ENCODE measurements at regions of chr17 and their contacts with region 1.

Region 1: DNA sequence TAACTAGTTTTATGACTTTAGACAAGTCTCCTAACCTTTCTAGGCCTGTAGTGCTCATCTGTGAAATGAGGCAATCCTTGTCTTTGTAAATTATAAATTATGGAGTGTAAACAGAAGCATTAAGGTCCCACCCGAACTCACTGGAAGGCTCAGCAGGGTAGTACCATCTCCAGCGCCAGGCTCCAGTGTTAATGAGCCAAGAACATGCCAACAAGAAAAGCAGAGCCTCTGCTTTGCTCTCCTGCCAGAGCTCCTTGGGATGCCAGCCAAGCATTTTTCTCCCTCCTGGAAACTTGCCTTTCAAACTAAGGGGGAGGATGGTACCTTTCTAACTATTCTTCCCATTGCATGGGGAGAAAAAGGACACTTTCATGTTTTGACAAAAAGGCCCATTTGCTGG is 14.9 kb downstream of the LIMD2 start:
- DNase-seq: peak in 4 of 10 donors; percentile 48 to 68 (median 64)
- H3K4me3 ChIP-seq: no peak overlapping the region
- H3K27ac ChIP-seq: peak overlapping the region in 23 of 59 donors; percentile 1 to 59 (median 12)
- H3K27me3 ChIP-seq: no peaks in the 10 kb centered on the region
- CTCF ChIP-seq: no peak

Region 2: DNA sequence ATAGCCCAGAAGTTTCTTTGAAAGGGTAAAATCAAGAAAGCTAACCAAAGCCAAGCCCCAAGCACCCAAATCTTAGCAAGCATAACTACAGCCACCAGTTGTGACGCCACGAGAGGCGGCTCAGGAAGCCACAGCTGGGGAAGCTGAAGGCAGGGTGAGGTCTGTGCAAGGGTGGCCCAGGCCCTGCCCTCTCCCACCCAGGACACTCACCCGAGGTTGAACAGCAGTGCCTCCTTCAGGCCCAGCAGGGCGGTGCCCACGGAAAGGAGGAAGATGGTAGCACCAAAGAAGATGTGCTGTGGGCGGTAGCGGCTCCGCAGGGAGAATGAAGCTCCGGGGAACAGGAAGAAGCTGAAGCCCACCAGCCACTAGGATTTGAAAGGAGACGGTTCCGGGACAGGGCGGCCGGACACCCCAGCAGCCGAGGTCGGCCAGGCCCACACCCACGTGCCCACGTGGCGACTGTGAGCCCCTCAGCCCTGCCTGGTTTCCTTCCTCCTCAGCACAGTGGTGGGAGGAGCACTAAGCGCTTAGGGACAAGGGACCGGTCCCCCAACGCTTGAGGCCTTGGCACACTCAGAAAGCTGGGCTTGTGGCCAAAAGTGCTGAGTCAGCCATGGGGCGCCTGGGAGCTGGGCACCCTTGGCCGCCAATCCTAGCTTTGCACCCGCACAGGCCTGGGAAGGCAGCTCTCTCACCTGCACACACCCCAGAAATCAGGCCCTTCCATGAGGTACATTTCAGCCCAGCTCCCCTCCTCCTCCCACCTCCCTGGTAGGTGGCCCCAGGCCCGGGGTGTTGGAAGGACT is 250.0 kb before region 1 on chr17:
- intact Hi-C with region 1: loop called in 1 of 2 experiments (anchors 5 kb)
- DNase-seq: peak; percentile 40 to 94 (median 84)
- H3K4me3 ChIP-seq: peak overlapping the region in 20 of 59 donors; percentile 3 to 41 (median 24)
- H3K27ac ChIP-seq: peak overlapping the region in 45 of 59 donors; percentile 2 to 92 (median 51)
- H3K27me3 ChIP-seq: no peaks in the 10 kb centered on the region
- CTCF ChIP-seq: peak in 1 of 56 donors; percentile 19

Region 3: DNA sequence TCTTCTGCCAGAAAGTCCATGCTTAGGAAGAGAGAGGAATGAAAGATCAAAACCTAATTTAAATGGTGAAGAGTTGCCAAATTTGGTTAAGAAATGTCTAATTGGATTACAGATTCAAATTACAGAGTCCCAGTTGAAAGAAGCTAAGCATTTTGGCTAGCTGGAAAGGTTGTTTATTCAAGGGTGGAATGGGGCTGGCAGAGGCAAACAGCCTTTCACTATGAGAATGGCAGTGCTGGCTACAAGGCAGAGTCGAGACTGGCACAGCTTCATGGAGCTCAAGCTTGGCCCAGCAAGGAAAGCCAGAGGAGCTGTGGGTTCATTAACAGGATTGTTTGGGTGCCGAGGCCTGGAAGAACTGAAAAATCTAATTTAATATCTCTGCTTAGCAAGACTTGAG is 49.3 kb before region 1 on chr17:
- intact Hi-C with region 1: loop called in 1 of 2 experiments (anchors 5 kb)
- DNase-seq: peak in 5 of 10 donors; percentile 9 to 64 (median 46)
- H3K4me3 ChIP-seq: no peak overlapping the region
- H3K27ac ChIP-seq: peak overlapping the region in 32 of 59 donors; percentile 1 to 59 (median 22)
- H3K27me3 ChIP-seq: no peaks in the 10 kb centered on the region
- CTCF ChIP-seq: no peak

Measured in dorsolateral prefrontal cortex (tissue), 120 donors.